HCT116 (cell line): ENCODE measurements at regions of chr12 and their contacts with region 1.

Region 1: DNA sequence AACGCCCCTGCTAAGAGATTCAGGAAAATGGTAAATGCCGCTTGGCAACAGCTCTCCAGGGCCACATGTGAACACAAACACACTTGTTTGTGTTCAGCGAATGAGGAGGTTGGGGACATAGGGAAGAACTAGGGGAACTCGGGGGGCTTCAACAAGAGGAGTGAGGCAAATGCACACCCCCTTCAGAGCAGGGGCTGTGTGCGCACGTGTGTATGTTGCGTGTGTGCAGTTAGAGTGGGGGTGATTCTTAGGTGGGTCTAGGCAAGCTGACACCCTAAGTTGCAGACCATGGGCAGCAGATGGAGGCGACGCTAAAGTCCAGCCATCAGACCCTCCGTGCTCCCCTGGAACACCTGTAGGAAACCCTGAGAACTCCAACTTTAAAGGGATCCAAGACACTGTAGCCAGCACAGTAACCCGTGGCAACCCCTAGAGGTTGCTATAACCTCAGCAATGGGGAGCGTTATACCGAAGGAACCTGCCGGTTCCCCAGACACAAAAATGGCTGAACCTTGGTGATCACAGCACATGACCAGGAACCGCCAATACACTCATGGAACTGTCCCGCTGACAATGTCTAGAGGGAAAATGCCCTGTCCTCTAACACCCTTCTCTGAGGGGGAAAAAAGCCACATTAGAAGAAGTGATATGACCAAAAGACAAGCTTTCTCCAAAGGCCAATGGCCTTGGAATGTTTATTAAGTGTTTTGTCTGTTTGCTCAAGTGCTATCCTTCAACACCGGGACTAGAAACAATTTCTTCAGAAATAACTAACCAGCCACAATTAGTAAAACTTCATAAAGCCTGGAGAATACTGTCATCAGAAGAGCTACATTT is 86.5 kb upstream of the CEP83 start:
- DNase-seq: peak; percentile 77
- ATAC-seq: peak; percentile 98
- H3K4me3 ChIP-seq: no peak overlapping the region
- H3K27ac ChIP-seq: no peak overlapping the region
- H3K4me1 ChIP-seq: no peaks in the 10 kb centered on the region
- H3K27me3 ChIP-seq: no peaks in the 10 kb centered on the region
- CTCF ChIP-seq: peak; percentile 72 to 88 (median 87); a peak in 5 of 6 replicates
- POLR2A ChIP-seq: no peak
- RAD21 ChIP-seq: peak; percentile 99

Region 2: DNA sequence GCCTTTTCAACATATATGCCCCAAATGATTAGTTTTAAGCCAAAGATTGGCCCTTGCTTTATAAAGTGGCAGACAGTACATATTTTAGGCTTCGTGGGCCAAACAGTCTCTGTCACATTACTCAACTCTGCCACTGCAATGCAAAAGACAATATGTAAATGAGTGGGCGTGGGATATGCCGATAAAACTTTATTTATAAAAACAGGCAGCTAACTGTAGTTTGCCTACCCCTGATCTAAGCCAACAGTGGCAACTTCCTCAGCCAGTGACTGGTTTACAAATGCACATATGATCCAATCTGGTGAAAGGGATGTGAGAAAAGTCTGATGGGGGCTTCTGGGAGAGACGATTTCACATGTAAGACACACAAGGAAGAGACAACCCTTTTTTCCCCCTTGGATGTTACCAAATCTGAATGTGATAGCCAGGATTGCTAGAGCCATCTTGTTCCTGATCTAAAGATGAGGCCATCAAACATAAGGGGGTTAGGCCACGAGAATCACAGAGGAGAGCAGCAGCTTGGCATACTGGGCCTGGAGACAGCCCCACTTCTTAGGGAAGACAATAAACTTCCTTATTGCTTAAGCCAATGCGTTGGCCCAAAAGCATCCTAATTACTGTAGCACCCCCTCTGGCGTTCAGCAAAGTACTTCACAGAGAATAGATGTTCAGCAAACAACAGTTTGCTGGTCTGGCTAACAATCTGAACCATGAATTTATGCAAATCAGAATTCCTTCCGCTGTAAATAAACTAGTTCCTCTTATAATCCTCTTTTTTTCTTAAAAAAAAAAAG is 179.4 kb after region 1 on chr12:
- CTCF ChIA-PET with region 1: no interaction called
- POLR2A ChIA-PET with region 1: no interaction called
- RAD21 ChIA-PET with region 1: no interaction called
- intact Hi-C with region 1: loop called (anchors 1 kb)
- DNase-seq: peak; percentile 38
- ATAC-seq: peak; percentile 89
- H3K4me3 ChIP-seq: no peak overlapping the region
- H3K27ac ChIP-seq: no peak overlapping the region
- H3K4me1 ChIP-seq: peaks cover 0 to 4% of the 10 kb centered on the region in 2 experiments; a peak in 2 of 4 replicates
- H3K27me3 ChIP-seq: no peaks in the 10 kb centered on the region
- CTCF ChIP-seq: peak; percentile 46 to 67 (median 48); a peak in 5 of 6 replicates
- POLR2A ChIP-seq: no peak
- RAD21 ChIP-seq: peak; percentile 57

Region 3: GRCh38 chr12:94875525-94875924 is 329.4 kb after region 1 on chr12:
- CTCF ChIA-PET with region 1: interaction called, 20 read pairs
- POLR2A ChIA-PET with region 1: interaction called, 3 read pairs
- RAD21 ChIA-PET with region 1: interaction called, 4 to 5 read pairs
- intact Hi-C with region 1: loop called (anchors 1 kb)
- DNase-seq: peak; percentile 65
- ATAC-seq: peak; percentile 68
- H3K4me3 ChIP-seq: no peak overlapping the region
- H3K27ac ChIP-seq: no peak overlapping the region
- H3K4me1 ChIP-seq: peaks cover 19 to 26% of the 10 kb centered on the region in 2 experiments; a peak in 3 of 4 replicates
- H3K27me3 ChIP-seq: no peaks in the 10 kb centered on the region
- CTCF ChIP-seq: peak; percentile 38 to 74 (median 68)
- POLR2A ChIP-seq: no peak
- RAD21 ChIP-seq: peak; percentile 89

Region 4: GRCh38 chr12:95117178-95117599 is 571.0 kb after region 1 on chr12:
- CTCF ChIA-PET with region 1: no interaction called
- POLR2A ChIA-PET with region 1: no interaction called
- RAD21 ChIA-PET with region 1: no interaction called
- intact Hi-C with region 1: loop called (anchors 10 kb)
- DNase-seq: peak; percentile 64
- ATAC-seq: peak; percentile 80
- H3K4me3 ChIP-seq: peak overlapping the region in 1 of 2 experiments; percentile 23; a peak in 2 of 4 replicates
- H3K27ac ChIP-seq: peak overlapping the region; percentile 5; the same call in 1 of the 2 replicates
- H3K4me1 ChIP-seq: peaks cover 9 to 49% of the 10 kb centered on the region in 2 experiments
- H3K27me3 ChIP-seq: no peaks in the 10 kb centered on the region
- CTCF ChIP-seq: peak; percentile 47 to 91 (median 83)
- POLR2A ChIP-seq: no peak
- RAD21 ChIP-seq: peak; percentile 93

Region 5: DNA sequence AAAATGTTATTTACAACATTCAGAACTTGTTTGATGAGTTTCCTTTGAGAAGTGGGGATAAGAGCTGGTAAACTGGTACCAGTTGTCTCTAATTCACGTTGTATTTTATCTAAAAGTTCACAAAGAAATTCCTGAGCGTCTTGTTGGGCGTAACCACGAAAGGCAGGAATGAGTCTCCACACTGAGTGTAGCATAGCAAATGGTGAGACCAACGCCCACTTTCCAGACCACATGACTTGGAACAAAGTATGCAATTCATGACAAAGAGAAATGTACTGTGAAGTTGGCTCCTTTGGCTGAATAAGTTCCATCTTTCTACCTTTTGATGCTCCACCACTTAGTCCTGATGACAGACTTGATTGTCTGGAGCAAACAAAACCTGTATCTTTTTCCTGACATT is 986.7 kb after region 1 on chr12:
- CTCF ChIA-PET with region 1: interaction called, 4 read pairs
- POLR2A ChIA-PET with region 1: no interaction called
- RAD21 ChIA-PET with region 1: no interaction called
- intact Hi-C with region 1: loop called (anchors 2 kb)
- DNase-seq: no peak
- ATAC-seq: no peak
- H3K4me3 ChIP-seq: no peak overlapping the region
- H3K27ac ChIP-seq: no peak overlapping the region
- H3K4me1 ChIP-seq: peaks cover 0 to 5% of the 10 kb centered on the region in 2 experiments; a peak in 1 of 4 replicates
- H3K27me3 ChIP-seq: no peaks in the 10 kb centered on the region
- CTCF ChIP-seq: no peak
- POLR2A ChIP-seq: no peak
- RAD21 ChIP-seq: no peak

Region 6: DNA sequence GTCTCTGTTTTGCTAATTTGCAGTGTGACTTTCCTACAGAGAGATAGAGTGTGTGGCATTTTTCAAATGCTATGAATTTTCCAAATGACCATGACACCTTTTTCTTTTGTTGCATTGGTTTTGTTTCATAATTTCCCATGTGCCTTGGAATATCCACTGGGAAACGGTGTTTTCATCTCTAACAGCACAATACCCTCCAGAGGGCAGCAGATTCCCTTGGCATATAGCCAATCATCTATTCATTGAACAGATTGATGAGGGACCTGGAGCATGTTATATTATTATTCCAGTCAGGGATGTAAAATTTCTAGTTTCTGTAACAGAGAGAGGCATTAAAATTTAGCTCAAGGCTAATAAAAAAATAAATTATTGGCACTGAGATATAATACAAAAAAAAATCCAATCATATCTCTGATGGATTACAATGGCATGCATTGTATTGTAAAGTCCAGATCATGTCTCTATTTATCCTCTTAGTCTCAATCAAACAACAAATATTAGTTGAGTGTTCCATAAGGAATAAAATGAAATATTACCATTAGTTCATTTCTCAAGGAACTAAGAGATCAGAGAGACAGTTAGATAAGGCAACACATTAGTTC is 1274.0 kb after region 1 on chr12:
- CTCF ChIA-PET with region 1: no interaction called
- POLR2A ChIA-PET with region 1: no interaction called
- RAD21 ChIA-PET with region 1: no interaction called
- intact Hi-C with region 1: loop called (anchors 10 kb)
- DNase-seq: peak; percentile 41
- ATAC-seq: peak; percentile 72
- H3K4me3 ChIP-seq: no peak overlapping the region
- H3K27ac ChIP-seq: no peak overlapping the region
- H3K4me1 ChIP-seq: no peaks in the 10 kb centered on the region
- H3K27me3 ChIP-seq: no peaks in the 10 kb centered on the region
- CTCF ChIP-seq: peak; percentile 60 to 80 (median 72); a peak in 5 of 6 replicates
- POLR2A ChIP-seq: no peak
- RAD21 ChIP-seq: peak; percentile 67